PC-9 (cell line): ENCODE measurements at regions of chr10 and their contacts with region 1.

Region 1: GRCh38 chr10:89217057-89217990 is 10.2 kb upstream of the CH25H start:
- DNase-seq: peak in 1 of 2 experiments; percentile 30
- H3K4me3 ChIP-seq: no peak overlapping the region
- H3K27ac ChIP-seq: peak overlapping the region; percentile 25; the same call in 1 of the 2 replicates
- H3K4me1 ChIP-seq: no peaks in the 10 kb centered on the region
- H3K27me3 ChIP-seq: no peaks in the 10 kb centered on the region
- CTCF ChIP-seq: peak; percentile 79

Region 2: DNA sequence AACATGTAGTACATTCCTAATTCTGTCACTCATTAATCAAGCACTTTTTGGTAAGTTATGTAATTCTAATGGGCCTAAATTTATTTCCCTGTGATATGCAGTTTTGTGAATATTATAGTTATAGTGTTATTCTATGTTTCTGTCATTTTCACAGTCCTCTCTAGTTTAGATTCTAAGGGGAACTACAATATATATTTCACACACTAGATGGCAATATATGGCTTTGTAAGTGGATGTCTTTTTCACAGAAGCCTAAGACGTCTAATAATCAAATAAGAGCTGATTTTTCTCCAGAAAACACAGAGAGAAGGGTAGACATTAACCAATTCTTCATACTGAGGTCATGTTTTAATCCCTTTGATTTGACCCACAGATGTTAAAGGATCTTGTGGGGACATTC is 652.3 kb before region 1 on chr10:
- CTCF ChIA-PET with region 1: no interaction called
- POLR2A ChIA-PET with region 1: no interaction called
- intact Hi-C with region 1: loop called (anchors 5 kb)
- DNase-seq: no peak
- H3K4me3 ChIP-seq: no peak overlapping the region
- H3K27ac ChIP-seq: no peak overlapping the region
- H3K4me1 ChIP-seq: no peaks in the 10 kb centered on the region
- H3K27me3 ChIP-seq: no peaks in the 10 kb centered on the region
- CTCF ChIP-seq: peak; percentile 60

Region 3: GRCh38 chr10:88932539-88933256 is 284.6 kb before region 1 on chr10:
- CTCF ChIA-PET with region 1: interaction called, 6 read pairs
- POLR2A ChIA-PET with region 1: no interaction called
- intact Hi-C with region 1: loop called (anchors 1 kb)
- DNase-seq: peak; percentile 58 to 79
- H3K4me3 ChIP-seq: no peak overlapping the region
- H3K27ac ChIP-seq: no peak overlapping the region
- H3K4me1 ChIP-seq: 0 out of 2 replicates have a peak, but pooled peaks cover 6% of the 10 kb centered on the region
- H3K27me3 ChIP-seq: no peaks in the 10 kb centered on the region
- CTCF ChIP-seq: peak; percentile 83

Region 4: DNA sequence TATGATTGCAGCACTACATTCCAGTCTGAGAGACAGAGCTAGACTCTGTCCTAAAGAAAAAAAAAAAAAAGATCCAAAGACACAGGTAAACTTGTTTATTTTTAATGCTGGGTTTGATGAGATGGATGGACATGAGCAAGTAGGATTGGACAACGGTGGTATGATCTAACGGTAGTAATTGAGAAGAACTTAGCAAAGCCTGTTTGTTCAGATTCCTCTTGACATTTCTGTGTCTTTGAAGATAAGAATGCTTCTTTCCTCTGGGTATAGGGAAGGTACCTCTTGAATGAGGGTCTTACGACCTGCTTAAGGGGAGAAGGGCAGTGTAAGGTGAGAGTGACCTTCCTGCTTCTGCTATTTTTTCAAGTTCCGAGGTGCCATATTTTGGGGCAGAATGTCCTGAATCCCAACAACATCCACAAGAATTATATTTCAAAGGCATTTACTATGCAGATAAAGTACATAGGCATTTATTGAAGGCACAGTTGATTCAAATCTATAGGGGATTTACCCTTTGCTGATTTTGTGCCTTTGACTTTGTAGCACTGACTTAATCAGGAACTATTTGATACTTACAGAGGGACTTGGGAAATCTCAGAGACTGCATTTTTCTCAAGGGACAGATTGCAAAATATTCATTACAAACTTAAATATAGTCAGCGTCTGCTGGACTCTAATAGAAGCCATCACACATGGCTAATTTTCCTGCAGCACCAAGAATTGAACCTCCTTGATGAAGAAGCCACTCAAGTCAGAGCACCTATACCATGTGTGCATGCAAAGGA is 182.1 kb before region 1 on chr10:
- CTCF ChIA-PET with region 1: interaction called, 11 read pairs
- POLR2A ChIA-PET with region 1: no interaction called
- intact Hi-C with region 1: loop called (anchors 1 kb)
- DNase-seq: no peak
- H3K4me3 ChIP-seq: no peak overlapping the region
- H3K27ac ChIP-seq: no peak overlapping the region
- H3K4me1 ChIP-seq: peaks cover 36% of the 10 kb centered on the region
- H3K27me3 ChIP-seq: no peaks in the 10 kb centered on the region
- CTCF ChIP-seq: no peak

Region 5: GRCh38 chr10:89301721-89302445 is 84.6 kb after region 1 on chr10 and contains the start of gene IFIT2:
- CTCF ChIA-PET with region 1: no interaction called
- POLR2A ChIA-PET with region 1: no interaction called
- intact Hi-C with region 1: no loop called
- DNase-seq: peak in 1 of 2 experiments; percentile 65
- H3K4me3 ChIP-seq: peak within 1 kb of the TSS; percentile 59
- H3K27ac ChIP-seq: peak within 1 kb of the TSS; percentile 89
- H3K4me1 ChIP-seq: peaks cover 37% of the 10 kb centered on the region
- H3K27me3 ChIP-seq: no peaks in the 10 kb centered on the region
- CTCF ChIP-seq: no peak
- total RNA-seq, gene IFIT2: 3.6 and 4.4 TPM in 2 replicates

Region 6: GRCh38 chr10:89563861-89564478 is 346.6 kb after region 1 on chr10:
- CTCF ChIA-PET with region 1: no interaction called
- POLR2A ChIA-PET with region 1: no interaction called
- intact Hi-C with region 1: loop called (anchors 1 kb)
- DNase-seq: peak in 1 of 2 experiments; percentile 42
- H3K4me3 ChIP-seq: no peak overlapping the region
- H3K27ac ChIP-seq: no peak overlapping the region
- H3K4me1 ChIP-seq: no peaks in the 10 kb centered on the region
- H3K27me3 ChIP-seq: no peaks in the 10 kb centered on the region
- CTCF ChIP-seq: peak; percentile 69

Region 7: GRCh38 chr10:89785095-89785494 is 567.8 kb after region 1 on chr10:
- CTCF ChIA-PET with region 1: no interaction called
- POLR2A ChIA-PET with region 1: no interaction called
- intact Hi-C with region 1: no loop called
- DNase-seq: no peak
- H3K4me3 ChIP-seq: no peak overlapping the region
- H3K27ac ChIP-seq: no peak overlapping the region
- H3K4me1 ChIP-seq: no peaks in the 10 kb centered on the region
- H3K27me3 ChIP-seq: no peaks in the 10 kb centered on the region
- CTCF ChIP-seq: no peak